Activated CD4-positive, alpha-beta T cell treated with anti-CD3 and anti-CD28 coated beads for 36 hours (primary cell): ENCODE measurements at regions of chr4 and their contacts with region 1.

Region 1: GRCh38 chr4:15655229-15656037 is at the start of gene FBXL5:
- DNase-seq: peak; percentile 90
- ATAC-seq: peak; percentile 76
- H3K4me3 Mint-ChIP-seq: peak within 1 kb of the TSS; percentile 99
- H3K27ac Mint-ChIP-seq: peak within 1 kb of the TSS; percentile 97
- H3K4me1 Mint-ChIP-seq: peaks cover 57% of the 10 kb centered on the region
- H3K27me3 Mint-ChIP-seq: no peaks in the 10 kb centered on the region
- total RNA-seq, gene FBXL5: 20.1 to 29.1 TPM

Region 2: DNA sequence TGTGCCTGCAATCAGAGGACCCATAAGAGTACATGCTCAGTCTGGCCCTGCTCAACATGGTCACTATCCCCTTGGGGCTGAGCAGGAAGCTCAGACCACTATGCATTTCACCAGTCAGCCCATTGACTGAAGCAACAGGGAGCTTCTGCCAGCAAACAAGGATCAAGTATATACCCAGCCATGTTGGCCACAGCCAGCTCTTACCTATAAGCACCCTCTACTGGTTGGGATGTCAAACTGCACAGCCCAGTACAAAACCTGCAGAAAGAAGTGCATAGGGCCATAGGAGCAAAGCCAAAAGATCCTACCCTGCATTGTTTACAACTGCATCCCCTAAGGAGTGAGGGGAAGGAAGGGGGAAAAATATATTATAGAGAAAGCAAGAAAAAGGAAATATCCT is 867.5 kb before region 1 on chr4:
- CTCF ChIA-PET with region 1: no interaction called
- POLR2A ChIA-PET with region 1: no interaction called
- intact Hi-C with region 1: loop called in 1 of 2 experiments (anchors 10 kb)
- DNase-seq: peak; percentile 42
- ATAC-seq: peak; percentile 27
- H3K4me3 Mint-ChIP-seq: no peak overlapping the region
- H3K27ac Mint-ChIP-seq: no peak overlapping the region
- H3K4me1 Mint-ChIP-seq: peaks cover 35% of the 10 kb centered on the region
- H3K27me3 Mint-ChIP-seq: peaks cover 18% of the 10 kb centered on the region

Region 3: DNA sequence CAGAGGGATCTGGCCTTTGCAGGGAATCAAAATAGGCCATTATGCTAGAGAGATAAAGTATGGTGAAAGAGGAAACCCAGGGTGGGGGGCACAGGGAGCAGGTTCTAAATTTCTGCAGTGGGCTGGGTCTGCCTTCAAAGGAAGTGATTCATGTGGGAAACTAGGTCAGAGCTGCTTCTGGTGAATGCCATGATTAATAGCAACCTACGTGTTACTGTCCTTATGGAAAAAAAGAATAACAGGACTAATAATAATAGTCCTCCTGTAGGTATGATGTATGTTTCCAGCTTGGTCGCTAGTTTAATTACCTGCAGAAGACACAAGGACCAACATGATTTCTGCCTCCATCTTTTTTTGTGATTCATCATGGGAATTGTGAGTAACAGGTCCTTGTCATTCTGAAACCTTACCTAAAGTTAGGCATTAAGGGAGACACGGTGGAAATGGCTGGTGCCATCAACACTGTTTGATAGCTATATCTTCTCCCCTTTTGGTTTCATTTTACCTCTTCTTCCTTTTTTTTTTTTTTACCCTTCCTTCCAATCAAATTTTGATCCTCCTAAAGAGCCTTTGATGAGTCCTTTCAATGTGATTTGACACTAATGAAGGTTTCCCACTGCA is 472.7 kb before region 1 on chr4:
- CTCF ChIA-PET with region 1: no interaction called
- POLR2A ChIA-PET with region 1: no interaction called
- intact Hi-C with region 1: loop called in 1 of 2 experiments (anchors 5 kb)
- DNase-seq: peak; percentile 54
- ATAC-seq: peak; percentile 94
- H3K4me3 Mint-ChIP-seq: peak overlapping the region; percentile 13
- H3K27ac Mint-ChIP-seq: peak overlapping the region; percentile 82
- H3K4me1 Mint-ChIP-seq: peaks cover 15% of the 10 kb centered on the region
- H3K27me3 Mint-ChIP-seq: no peaks in the 10 kb centered on the region

Region 4: GRCh38 chr4:15420642-15421041 is 234.8 kb before region 1 on chr4:
- CTCF ChIA-PET with region 1: interaction called, 5 read pairs
- POLR2A ChIA-PET with region 1: no interaction called
- intact Hi-C with region 1: loop called in 1 of 2 experiments (anchors 5 kb)
- DNase-seq: no peak
- ATAC-seq: no peak
- H3K4me3 Mint-ChIP-seq: no peak overlapping the region
- H3K27ac Mint-ChIP-seq: no peak overlapping the region
- H3K4me1 Mint-ChIP-seq: peaks cover 27% of the 10 kb centered on the region
- H3K27me3 Mint-ChIP-seq: peaks cover 2% of the 10 kb centered on the region

Region 5: GRCh38 chr4:15765910-15766697 is 110.7 kb after region 1 on chr4:
- CTCF ChIA-PET with region 1: no interaction called
- POLR2A ChIA-PET with region 1: no interaction called
- intact Hi-C with region 1: loop called in 1 of 2 experiments (anchors 2 kb)
- DNase-seq: peak; percentile 70
- ATAC-seq: peak; percentile 82
- H3K4me3 Mint-ChIP-seq: peak overlapping the region; percentile 11
- H3K27ac Mint-ChIP-seq: peak overlapping the region; percentile 44
- H3K4me1 Mint-ChIP-seq: peaks cover 48% of the 10 kb centered on the region
- H3K27me3 Mint-ChIP-seq: no peaks in the 10 kb centered on the region